ENCODE measurements at regions of chr3 and their contacts with region 1.

Region 1: GRCh38 chr3:136042608-136043221 is 77.2 kb downstream of the PPP2R3A start:
- DNase-seq: no peak
- ATAC-seq: peak; percentile 19
- H3K4me3 Mint-ChIP-seq: no peak overlapping the region
- H3K27ac Mint-ChIP-seq: no peak overlapping the region
- H3K4me1 Mint-ChIP-seq: no peaks in the 10 kb centered on the region
- H3K27me3 Mint-ChIP-seq: peaks cover 13% of the 10 kb centered on the region

Region 2: GRCh38 chr3:135706758-135707375 is 335.8 kb before region 1 on chr3:
- CTCF ChIA-PET with region 1: no interaction called
- POLR2A ChIA-PET with region 1: no interaction called
- intact Hi-C with region 1: no loop called
- DNase-seq: no peak
- ATAC-seq: no peak
- H3K4me3 Mint-ChIP-seq: no peak overlapping the region
- H3K27ac Mint-ChIP-seq: no peak overlapping the region
- H3K4me1 Mint-ChIP-seq: no peaks in the 10 kb centered on the region
- H3K27me3 Mint-ChIP-seq: peaks cover 2% of the 10 kb centered on the region

Region 3: GRCh38 chr3:135736740-135737139 is 306.0 kb before region 1 on chr3:
- CTCF ChIA-PET with region 1: no interaction called
- POLR2A ChIA-PET with region 1: no interaction called
- intact Hi-C with region 1: loop called in 1 of 2 experiments (anchors 2 kb)
- DNase-seq: peak; percentile 32
- ATAC-seq: no peak
- H3K4me3 Mint-ChIP-seq: no peak overlapping the region
- H3K27ac Mint-ChIP-seq: no peak overlapping the region
- H3K4me1 Mint-ChIP-seq: no peaks in the 10 kb centered on the region
- H3K27me3 Mint-ChIP-seq: peaks cover 4% of the 10 kb centered on the region

Region 4: DNA sequence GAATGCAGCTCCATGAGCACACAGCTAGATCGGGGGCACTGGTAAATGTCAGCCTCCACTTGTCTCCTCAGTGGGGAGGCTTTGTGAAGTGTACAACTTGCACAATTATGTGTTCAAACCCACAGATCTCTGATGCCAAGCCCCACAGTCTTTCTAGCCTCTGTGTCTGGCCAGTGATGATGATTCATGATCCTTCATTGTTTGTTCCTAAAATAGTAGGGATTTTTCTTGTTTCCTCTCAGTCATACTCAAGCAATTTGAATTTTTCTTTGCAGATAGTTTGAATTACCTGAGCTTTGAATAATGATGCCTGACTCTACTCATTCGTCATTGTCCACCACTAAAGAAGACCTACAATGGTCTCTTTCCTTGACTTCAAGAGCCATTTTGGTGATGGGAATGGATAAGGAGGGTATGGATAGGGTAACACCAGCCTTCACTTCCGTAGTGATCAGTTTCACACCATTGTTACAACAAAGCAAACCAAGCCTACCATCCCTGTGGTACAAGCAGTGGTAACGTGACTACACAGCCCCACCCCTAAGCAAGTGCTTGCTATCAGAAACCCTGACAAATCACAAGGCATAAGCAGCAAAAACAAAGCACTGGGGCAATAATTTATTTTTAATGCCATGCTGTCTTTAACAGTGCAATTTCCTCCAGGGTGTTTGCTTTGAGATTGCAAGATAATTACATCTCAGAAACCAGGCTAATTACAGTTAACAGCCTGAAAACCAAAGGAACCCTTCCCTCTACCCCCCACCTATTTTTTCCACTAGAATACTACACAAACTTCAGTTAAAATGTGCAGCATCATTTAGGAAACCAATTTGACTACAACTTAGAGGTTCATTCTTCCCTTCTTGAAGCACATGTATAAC is 191.3 kb before region 1 on chr3:
- CTCF ChIA-PET with region 1: no interaction called
- POLR2A ChIA-PET with region 1: no interaction called
- intact Hi-C with region 1: no loop called
- DNase-seq: no peak
- ATAC-seq: no peak
- H3K4me3 Mint-ChIP-seq: no peak overlapping the region
- H3K27ac Mint-ChIP-seq: no peak overlapping the region
- H3K4me1 Mint-ChIP-seq: no peaks in the 10 kb centered on the region
- H3K27me3 Mint-ChIP-seq: peaks cover 10% of the 10 kb centered on the region

Region 5: GRCh38 chr3:135895106-135895733 is 147.5 kb before region 1 on chr3:
- CTCF ChIA-PET with region 1: interaction called, 7 read pairs
- POLR2A ChIA-PET with region 1: no interaction called
- intact Hi-C with region 1: loop called in 1 of 2 experiments (anchors 5 kb)
- DNase-seq: peak; percentile 73
- ATAC-seq: no peak
- H3K4me3 Mint-ChIP-seq: no peak overlapping the region
- H3K27ac Mint-ChIP-seq: no peak overlapping the region
- H3K4me1 Mint-ChIP-seq: no peaks in the 10 kb centered on the region
- H3K27me3 Mint-ChIP-seq: peaks cover 6% of the 10 kb centered on the region

Region 6: DNA sequence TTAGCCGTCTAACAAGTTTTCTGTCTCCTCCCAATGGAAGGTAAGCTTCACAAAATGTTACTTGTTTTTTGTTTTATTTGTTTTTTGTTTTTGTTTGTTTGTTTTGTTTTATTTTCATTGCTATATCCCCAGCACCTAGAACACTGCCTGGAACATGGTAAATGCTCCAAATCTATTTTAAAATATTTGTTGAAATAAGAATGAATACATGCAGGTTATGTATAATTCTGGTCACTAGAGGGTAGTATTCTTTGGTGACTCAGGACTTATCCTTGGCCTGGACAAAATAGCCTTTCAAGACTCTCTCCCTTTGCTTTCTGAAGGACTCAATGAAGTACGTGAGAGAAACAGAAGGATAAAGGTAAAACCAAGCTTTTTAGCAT is 124.1 kb before region 1 on chr3:
- CTCF ChIA-PET with region 1: interaction called, 5 read pairs
- POLR2A ChIA-PET with region 1: no interaction called
- intact Hi-C with region 1: loop called (anchors 1 to 2 kb)
- DNase-seq: no peak
- ATAC-seq: no peak
- H3K4me3 Mint-ChIP-seq: no peak overlapping the region
- H3K27ac Mint-ChIP-seq: no peak overlapping the region
- H3K4me1 Mint-ChIP-seq: no peaks in the 10 kb centered on the region
- H3K27me3 Mint-ChIP-seq: peaks cover 12% of the 10 kb centered on the region

Region 7: GRCh38 chr3:136021803-136022202 is 20.9 kb before region 1 on chr3:
- CTCF ChIA-PET with region 1: interaction called, 11 read pairs
- POLR2A ChIA-PET with region 1: no interaction called
- intact Hi-C with region 1: no loop called
- DNase-seq: no peak
- ATAC-seq: no peak
- H3K4me3 Mint-ChIP-seq: no peak overlapping the region
- H3K27ac Mint-ChIP-seq: no peak overlapping the region
- H3K4me1 Mint-ChIP-seq: no peaks in the 10 kb centered on the region
- H3K27me3 Mint-ChIP-seq: peaks cover 16% of the 10 kb centered on the region

Region 8: GRCh38 chr3:136343446-136344281 is 300.9 kb after region 1 on chr3:
- CTCF ChIA-PET with region 1: no interaction called
- POLR2A ChIA-PET with region 1: no interaction called
- intact Hi-C with region 1: no loop called
- DNase-seq: no peak
- ATAC-seq: no peak
- H3K4me3 Mint-ChIP-seq: no peak overlapping the region
- H3K27ac Mint-ChIP-seq: peak overlapping the region; percentile 74
- H3K4me1 Mint-ChIP-seq: no peaks in the 10 kb centered on the region
- H3K27me3 Mint-ChIP-seq: no peaks in the 10 kb centered on the region